ENCODE measurements at regions of chr12 and their contacts with region 1.

Region 1: GRCh38 chr12:55760663-55761062 is 17.7 kb downstream of the GDF11 start:
- DNase-seq: no peak
- H3K4me3 Mint-ChIP-seq: no peak overlapping the region
- H3K27ac Mint-ChIP-seq: no peak overlapping the region
- H3K4me1 Mint-ChIP-seq: no peaks in the 10 kb centered on the region
- H3K27me3 Mint-ChIP-seq: no peaks in the 10 kb centered on the region
- CTCF ChIP-seq: no peak

Region 2: DNA sequence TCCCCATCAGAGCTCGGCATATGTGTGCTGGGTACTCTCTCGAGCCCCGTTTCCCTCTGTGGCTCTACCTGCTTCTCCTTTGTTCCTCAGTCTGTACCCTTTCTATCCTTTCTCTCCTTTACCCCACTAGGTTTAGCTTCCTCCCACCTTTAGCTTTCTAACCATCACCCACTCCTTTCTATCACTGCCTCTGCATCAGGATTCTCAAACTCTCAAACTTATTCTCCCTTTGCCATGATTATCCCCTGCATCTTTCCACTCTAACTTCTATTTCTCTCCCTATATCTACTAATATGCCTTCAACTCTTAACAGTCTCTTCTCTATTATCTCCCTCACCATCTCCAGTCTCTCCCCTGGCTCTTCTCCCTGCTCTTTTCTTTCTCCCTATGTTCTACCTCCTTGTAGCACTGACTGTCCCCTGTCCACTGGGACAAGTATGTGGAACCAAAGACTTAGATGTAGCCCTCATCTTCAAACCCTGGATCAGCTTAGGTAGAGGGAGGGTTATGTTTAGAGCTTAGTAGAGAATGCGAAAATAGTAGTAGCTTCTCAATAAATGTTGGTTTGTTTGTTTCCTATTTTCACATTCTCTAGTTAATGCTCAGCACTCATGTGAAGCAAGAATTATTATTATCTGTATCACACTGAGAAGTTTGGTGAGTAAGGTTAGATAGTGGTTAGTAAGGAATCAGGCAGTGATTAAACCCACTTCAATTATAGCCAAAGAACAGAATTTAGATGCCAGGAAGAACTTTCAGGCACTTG is 14.3 kb before region 1 on chr12:
- CTCF ChIA-PET with region 1: interaction called, 10 read pairs
- intact Hi-C with region 1: no loop called
- DNase-seq: no peak
- H3K4me3 Mint-ChIP-seq: no peak overlapping the region
- H3K27ac Mint-ChIP-seq: peak overlapping the region; percentile 13
- H3K4me1 Mint-ChIP-seq: peaks cover 24% of the 10 kb centered on the region
- H3K27me3 Mint-ChIP-seq: peaks cover 34% of the 10 kb centered on the region
- CTCF ChIP-seq: no peak

Measured in Calu3 (cell line).